H1 (cell line): ENCODE measurements at regions of chr20 and their contacts with region 1.

Region 1: GRCh38 chr20:23668477-23668951 is 20.3 kb downstream of the CST4 start:
- DNase-seq: peak; percentile 19 to 88
- H3K4me3 ChIP-seq: no peak overlapping the region
- H3K27ac ChIP-seq: no peak overlapping the region
- H3K4me1 ChIP-seq: no peaks in the 10 kb centered on the region
- H3K27me3 ChIP-seq: no peaks in the 10 kb centered on the region
- CTCF ChIP-seq: peak; percentile 80 to 90 (median 86)
- EP300 ChIP-seq: no peak
- POLR2A ChIP-seq: no peak
- RAD21 ChIP-seq: peak; percentile 89

Region 2: GRCh38 chr20:23530937-23531567 is 137.5 kb before region 1 on chr20:
- CTCF ChIA-PET with region 1: no interaction called
- POLR2A ChIA-PET with region 1: no interaction called
- DNase-seq: no peak
- H3K4me3 ChIP-seq: no peak overlapping the region
- H3K27ac ChIP-seq: no peak overlapping the region
- H3K4me1 ChIP-seq: peaks cover 4 to 23% (median 14%) of the 10 kb centered on the region in 4 experiments; a peak in 6 of 7 replicates
- H3K27me3 ChIP-seq: peaks cover 0 to 3% (median 0%) of the 10 kb centered on the region in 4 experiments; a peak in 2 of 7 replicates
- CTCF ChIP-seq: no peak
- EP300 ChIP-seq: no peak
- POLR2A ChIP-seq: no peak
- RAD21 ChIP-seq: no peak

Region 3: GRCh38 chr20:23655491-23656211 is 12.9 kb before region 1 on chr20:
- CTCF ChIA-PET with region 1: interaction called, 29 read pairs
- POLR2A ChIA-PET with region 1: no interaction called
- DNase-seq: peak in 1 of 2 experiments; percentile 50
- H3K4me3 ChIP-seq: no peak overlapping the region
- H3K27ac ChIP-seq: no peak overlapping the region
- H3K4me1 ChIP-seq: peaks cover 0 to 5% (median 0%) of the 10 kb centered on the region in 4 experiments; a peak in 2 of 7 replicates
- H3K27me3 ChIP-seq: no peaks in the 10 kb centered on the region; a peak in 1 of 7 replicates
- CTCF ChIP-seq: no peak
- EP300 ChIP-seq: no peak
- POLR2A ChIP-seq: no peak
- RAD21 ChIP-seq: no peak

Region 4: DNA sequence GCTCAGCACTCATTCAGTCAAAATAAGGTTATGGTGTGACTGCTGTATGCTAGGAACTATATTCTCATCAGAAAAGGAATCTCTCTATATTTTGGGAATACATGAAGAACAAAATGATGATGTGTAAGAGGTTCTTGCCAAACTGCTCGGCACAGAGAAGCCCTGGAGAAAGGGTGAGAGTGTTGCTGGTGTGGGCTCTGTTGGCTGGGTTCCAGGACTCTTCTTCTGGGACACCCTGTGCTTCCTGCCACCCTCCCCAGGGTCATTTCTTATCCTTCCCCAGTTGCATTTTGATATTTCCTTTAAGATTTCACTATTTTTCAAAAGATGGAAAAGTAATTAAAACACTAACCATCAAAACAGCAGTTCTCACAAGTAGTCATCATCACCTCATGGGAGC is 53.4 kb after region 1 on chr20:
- CTCF ChIA-PET with region 1: interaction called, 11 read pairs
- POLR2A ChIA-PET with region 1: no interaction called
- DNase-seq: no peak
- H3K4me3 ChIP-seq: no peak overlapping the region
- H3K27ac ChIP-seq: no peak overlapping the region
- H3K4me1 ChIP-seq: no peaks in the 10 kb centered on the region
- H3K27me3 ChIP-seq: no peaks in the 10 kb centered on the region
- CTCF ChIP-seq: no peak
- EP300 ChIP-seq: no peak
- POLR2A ChIP-seq: no peak
- RAD21 ChIP-seq: no peak

Region 5: GRCh38 chr20:23794841-23795240 is 126.3 kb after region 1 on chr20:
- CTCF ChIA-PET with region 1: interaction called, 11 read pairs
- POLR2A ChIA-PET with region 1: no interaction called
- DNase-seq: no peak
- H3K4me3 ChIP-seq: no peak overlapping the region
- H3K27ac ChIP-seq: no peak overlapping the region
- H3K4me1 ChIP-seq: no peaks in the 10 kb centered on the region
- H3K27me3 ChIP-seq: no peaks in the 10 kb centered on the region
- CTCF ChIP-seq: no peak
- EP300 ChIP-seq: no peak
- POLR2A ChIP-seq: no peak
- RAD21 ChIP-seq: no peak